ENCODE measurements at regions of chr7 and their contacts with region 1.

Region 1: DNA sequence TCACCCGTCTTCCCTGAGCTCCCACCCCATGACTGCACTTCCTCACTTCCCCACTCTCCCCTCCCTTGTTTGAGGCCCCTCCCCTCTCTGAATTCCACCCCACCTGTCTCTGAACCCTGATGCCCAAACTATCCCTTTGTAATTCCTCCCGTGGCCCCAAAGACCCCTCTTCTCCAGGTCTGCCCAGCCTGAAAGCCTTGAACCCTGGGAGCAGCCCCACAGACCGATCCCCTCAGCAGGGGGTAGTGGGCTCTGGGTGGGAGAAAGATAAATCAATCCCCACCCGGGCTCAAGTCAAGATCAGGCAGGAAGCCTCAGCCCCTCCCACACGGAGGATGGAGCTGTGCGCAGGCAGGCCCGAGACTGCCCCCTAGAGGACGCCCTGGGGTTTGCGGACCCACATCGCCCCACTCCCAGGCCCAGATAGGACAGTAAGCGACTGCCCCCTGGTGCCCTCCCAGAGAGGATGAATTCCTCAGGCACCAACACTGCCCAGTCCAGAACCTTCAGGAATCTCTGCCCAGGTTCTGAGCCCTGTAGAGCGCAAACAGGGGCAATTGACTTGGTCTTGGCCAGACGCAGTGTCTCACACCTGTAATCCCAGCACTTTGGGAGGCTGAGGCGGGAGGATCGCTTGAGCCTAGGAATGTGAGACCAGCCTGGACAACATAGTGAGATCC is 11.7 kb downstream of the HSPB1 start:
- DNase-seq: peak; percentile 93
- H3K4me3 Mint-ChIP-seq: peak overlapping the region; percentile 53
- H3K27ac Mint-ChIP-seq: peak overlapping the region; percentile 82
- H3K4me1 Mint-ChIP-seq: peaks cover 25% of the 10 kb centered on the region
- H3K27me3 Mint-ChIP-seq: no peaks in the 10 kb centered on the region

Region 2: DNA sequence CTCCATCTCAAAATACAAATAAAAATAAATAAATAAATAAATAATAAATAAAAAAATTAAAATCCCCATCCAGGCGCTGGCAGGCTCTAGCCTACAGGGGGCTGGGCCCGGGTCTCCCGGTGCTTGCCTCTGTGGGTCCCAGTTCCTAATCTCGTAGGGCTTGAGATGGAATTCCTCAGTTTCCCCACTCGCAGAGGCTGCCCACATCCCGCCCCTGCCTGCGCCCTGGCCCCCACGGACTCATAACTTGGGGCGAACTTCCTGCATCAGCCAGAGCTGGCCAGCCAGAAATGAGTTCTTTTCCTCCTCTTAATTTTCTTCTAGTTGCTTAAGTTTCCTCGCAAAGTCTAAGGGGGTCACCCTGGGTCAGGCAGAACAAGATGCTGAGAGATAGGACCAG is 134.5 kb before region 1 on chr7:
- intact Hi-C with region 1: loop called (anchors 1 kb)
- DNase-seq: no peak
- H3K4me3 Mint-ChIP-seq: no peak overlapping the region
- H3K27ac Mint-ChIP-seq: no peak overlapping the region
- H3K4me1 Mint-ChIP-seq: peaks cover 4% of the 10 kb centered on the region
- H3K27me3 Mint-ChIP-seq: no peaks in the 10 kb centered on the region

Region 3: DNA sequence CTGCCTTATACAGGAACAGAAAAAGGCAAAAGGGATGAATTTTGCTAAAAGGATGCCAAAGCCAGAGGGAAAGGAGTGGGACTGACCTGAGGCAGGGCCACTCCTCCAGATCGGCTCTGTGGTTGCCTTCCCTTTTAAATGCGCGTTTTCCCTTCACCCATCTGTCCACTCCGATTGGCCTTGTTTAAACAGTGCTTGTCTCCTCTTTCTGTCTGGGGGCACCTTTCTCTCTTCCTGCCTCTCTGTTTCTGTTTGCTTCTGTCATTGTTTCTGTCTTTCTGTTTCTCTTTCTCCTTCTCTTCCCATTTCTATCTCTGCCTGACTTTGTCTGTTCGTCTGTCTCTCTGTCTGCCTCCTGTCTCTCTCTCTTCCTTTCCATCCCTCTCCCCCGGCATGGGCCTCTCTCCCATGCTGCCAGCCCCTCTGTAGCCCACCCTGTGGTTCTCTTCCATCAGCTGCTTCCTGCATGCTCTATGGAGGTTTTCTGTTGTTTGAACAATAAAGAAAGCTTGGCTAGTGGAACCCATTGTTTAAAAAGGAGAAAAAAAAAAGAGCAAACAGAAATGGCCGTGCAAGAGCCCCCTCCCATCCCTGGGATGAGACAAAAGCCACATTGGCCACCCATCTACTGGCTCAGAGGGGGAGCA is 41.2 kb before region 1 on chr7:
- intact Hi-C with region 1: loop called (anchors 5 kb)
- DNase-seq: no peak
- H3K4me3 Mint-ChIP-seq: peak overlapping the region; percentile 58
- H3K27ac Mint-ChIP-seq: peak overlapping the region; percentile 18
- H3K4me1 Mint-ChIP-seq: peaks cover 17% of the 10 kb centered on the region
- H3K27me3 Mint-ChIP-seq: peaks cover 30% of the 10 kb centered on the region

Region 4: DNA sequence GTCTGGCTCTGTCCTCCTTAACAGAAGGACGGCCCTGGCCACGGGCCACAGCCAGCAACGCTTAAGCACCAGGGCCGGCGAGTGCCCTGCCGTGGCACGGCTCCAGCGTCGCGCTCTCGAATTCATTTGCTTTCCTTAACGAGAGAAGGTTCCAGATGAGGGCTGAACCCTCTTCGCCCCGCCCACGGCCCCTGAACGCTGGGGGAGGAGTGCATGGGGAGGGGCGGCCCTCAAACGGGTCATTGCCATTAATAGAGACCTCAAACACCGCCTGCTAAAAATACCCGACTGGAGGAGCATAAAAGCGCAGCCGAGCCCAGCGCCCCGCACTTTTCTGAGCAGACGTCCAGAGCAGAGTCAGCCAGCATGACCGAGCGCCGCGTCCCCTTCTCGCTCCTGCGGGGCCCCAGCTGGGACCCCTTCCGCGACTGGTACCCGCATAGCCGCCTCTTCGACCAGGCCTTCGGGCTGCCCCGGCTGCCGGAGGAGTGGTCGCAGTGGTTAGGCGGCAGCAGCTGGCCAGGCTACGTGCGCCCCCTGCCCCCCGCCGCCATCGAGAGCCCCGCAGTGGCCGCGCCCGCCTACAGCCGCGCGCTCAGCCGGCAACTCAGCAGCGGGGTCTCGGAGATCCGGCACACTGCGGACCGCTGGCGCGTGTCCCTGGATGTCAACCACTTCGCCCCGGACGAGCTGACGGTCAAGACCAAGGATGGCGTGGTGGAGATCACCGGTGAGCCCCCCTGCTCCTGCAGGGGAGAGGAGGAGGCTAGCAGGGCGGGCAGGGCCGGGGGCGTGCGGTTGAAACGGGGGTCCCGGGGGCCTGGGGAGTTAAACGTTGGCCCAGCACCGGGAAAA is 11.6 kb before region 1 on chr7 and contains the start of gene HSPB1:
- intact Hi-C with region 1: loop called (anchors 1 kb)
- DNase-seq: peak; percentile 54
- H3K4me3 Mint-ChIP-seq: peak within 1 kb of the TSS; percentile 88
- H3K27ac Mint-ChIP-seq: peak within 1 kb of the TSS; percentile 79
- H3K4me1 Mint-ChIP-seq: peaks cover 16% of the 10 kb centered on the region
- H3K27me3 Mint-ChIP-seq: peaks cover 3% of the 10 kb centered on the region
- total RNA-seq, gene HSPB1: 116 and 131 TPM in 2 replicates

Region 5: DNA sequence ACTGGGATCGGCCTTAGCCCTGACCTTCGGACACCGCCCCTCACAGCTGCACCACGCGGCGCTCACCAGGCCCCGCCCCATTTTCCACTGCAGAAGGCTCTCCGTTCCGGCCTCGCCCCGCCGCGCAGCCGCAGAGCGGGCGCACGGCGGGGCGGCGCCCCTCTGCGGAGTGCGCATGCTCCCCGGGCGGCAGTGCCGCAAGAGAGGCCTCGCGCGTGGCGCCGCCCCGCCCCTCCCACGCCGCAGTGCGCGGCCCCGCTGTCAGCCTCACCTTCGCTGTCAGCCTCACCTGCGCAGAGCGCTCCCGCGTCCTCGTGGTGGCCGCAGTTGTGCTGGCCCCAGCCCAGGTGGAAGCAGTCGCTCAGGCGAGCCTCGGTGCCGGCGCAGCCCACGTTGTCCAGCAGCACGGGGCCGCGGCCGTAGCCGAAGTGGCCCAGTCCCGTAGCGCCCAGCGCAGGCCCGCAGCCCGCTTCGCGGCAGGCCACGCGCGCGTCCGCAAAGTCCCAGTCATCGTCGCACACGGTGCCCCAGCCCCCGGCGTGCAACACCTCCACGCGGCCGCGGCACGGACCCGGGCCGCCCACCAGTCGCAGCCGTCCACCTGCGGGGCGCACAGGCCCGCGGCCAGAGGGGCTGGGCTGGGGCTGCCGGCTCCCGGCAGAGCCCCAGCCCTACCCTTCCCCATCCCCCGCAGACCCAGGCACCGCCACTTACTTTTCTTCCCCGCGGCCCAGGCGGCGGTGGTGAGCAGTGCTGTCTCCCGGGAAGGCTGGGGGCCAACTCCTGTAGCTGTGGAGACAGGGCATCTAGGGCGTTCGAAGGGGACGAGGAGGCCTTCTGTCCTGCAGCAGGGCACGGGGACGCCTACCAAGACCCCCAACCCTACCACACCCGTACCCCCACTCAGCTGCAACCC is 79.2 kb after region 1 on chr7:
- intact Hi-C with region 1: loop called (anchors 2 kb)
- DNase-seq: peak; percentile 89
- H3K4me3 Mint-ChIP-seq: peak overlapping the region; percentile 80
- H3K27ac Mint-ChIP-seq: peak overlapping the region; percentile 97
- H3K4me1 Mint-ChIP-seq: peaks cover 14% of the 10 kb centered on the region
- H3K27me3 Mint-ChIP-seq: no peaks in the 10 kb centered on the region